Dendritic cell treated with granulocyte-macrophage colony-stimulating factor and Interleukin-4, amounts not matched to agents 40 ng/mL and 50 ng/mL, for 4 days (primary cell): ENCODE measurements at regions of chr4 and their contacts with region 1.

Region 1: GRCh38 chr4:93263166-93263565 is 565.4 kb upstream of the ATOH1 start:
- H3K4me3 Mint-ChIP-seq: no peak overlapping the region
- H3K27ac Mint-ChIP-seq: no peak overlapping the region
- H3K4me1 Mint-ChIP-seq: no peaks in the 10 kb centered on the region
- H3K27me3 Mint-ChIP-seq: no peaks in the 10 kb centered on the region

Region 2: GRCh38 chr4:93066749-93067148 is 196.4 kb before region 1 on chr4:
- intact Hi-C with region 1: no loop called
- H3K4me3 Mint-ChIP-seq: no peak overlapping the region
- H3K27ac Mint-ChIP-seq: no peak overlapping the region
- H3K4me1 Mint-ChIP-seq: no peaks in the 10 kb centered on the region
- H3K27me3 Mint-ChIP-seq: no peaks in the 10 kb centered on the region

Region 3: DNA sequence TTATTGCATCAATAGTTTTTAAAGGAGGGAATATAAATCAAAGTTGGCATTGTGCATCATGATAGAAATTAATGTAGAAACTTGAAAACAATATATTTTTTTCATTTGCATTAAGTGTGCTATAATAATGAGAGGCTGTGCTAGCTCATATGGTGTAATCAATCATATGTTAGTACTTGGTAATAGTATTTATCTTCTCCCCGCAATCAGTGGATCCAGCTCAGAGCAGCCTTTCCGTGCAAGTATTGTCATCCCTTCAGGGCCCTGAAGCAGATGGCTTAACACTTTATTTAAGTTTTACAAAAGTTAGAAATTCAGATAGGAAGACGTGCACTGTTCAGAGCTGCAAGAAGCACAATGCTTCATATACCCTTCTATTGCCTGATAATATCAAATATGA is 50.9 kb before region 1 on chr4:
- intact Hi-C with region 1: loop called (anchors 1 kb)
- H3K4me3 Mint-ChIP-seq: no peak overlapping the region
- H3K27ac Mint-ChIP-seq: no peak overlapping the region
- H3K4me1 Mint-ChIP-seq: no peaks in the 10 kb centered on the region
- H3K27me3 Mint-ChIP-seq: no peaks in the 10 kb centered on the region